PC-9 (cell line): ENCODE measurements at regions of chr9 and their contacts with region 1.

Region 1: GRCh38 chr9:121201738-121202533 is at the start of gene RAB14:
- DNase-seq: peak; percentile 90 to 100
- H3K4me3 ChIP-seq: peak within 1 kb of the TSS; percentile 92
- H3K27ac ChIP-seq: peak within 1 kb of the TSS; percentile 67
- H3K4me1 ChIP-seq: peaks cover 28% of the 10 kb centered on the region
- H3K27me3 ChIP-seq: no peaks in the 10 kb centered on the region
- CTCF ChIP-seq: peak; percentile 59
- total RNA-seq, gene RAB14: 58.1 and 82.6 TPM in 2 replicates

Region 2: GRCh38 chr9:120628207-120628924 is 573.6 kb before region 1 on chr9:
- CTCF ChIA-PET with region 1: no interaction called
- POLR2A ChIA-PET with region 1: no interaction called
- intact Hi-C with region 1: no loop called
- DNase-seq: no peak
- H3K4me3 ChIP-seq: no peak overlapping the region
- H3K27ac ChIP-seq: peak overlapping the region; percentile 32; the same call in 1 of the 2 replicates
- H3K4me1 ChIP-seq: no peaks in the 10 kb centered on the region
- H3K27me3 ChIP-seq: no peaks in the 10 kb centered on the region
- CTCF ChIP-seq: no peak

Region 3: DNA sequence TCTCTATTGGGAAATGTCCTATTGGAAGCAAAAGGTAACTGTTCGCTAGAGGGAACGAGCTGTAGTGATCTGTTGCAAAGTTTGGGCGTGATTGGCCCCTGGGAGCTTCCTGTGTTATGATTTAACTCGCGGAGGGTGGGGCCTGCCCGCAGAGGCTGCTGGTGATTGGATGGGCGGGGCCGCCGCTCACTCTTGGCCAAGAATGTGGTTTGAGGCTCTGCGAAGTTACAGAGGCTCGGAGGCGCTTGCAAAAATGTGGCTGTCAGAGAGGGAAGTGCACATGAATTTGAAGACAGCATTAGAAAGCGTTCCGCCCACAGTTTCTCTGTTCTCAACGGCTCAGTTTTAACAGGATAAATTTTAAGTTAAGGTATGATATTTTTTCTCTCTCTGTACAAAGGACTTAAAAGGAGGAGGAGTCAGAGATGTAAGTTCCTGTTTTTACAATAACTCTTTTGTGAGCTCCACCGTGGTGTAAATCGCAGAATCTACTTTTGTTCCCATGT is 80.3 kb before region 1 on chr9:
- CTCF ChIA-PET with region 1: no interaction called
- POLR2A ChIA-PET with region 1: no interaction called
- intact Hi-C with region 1: loop called (anchors 1 kb)
- DNase-seq: peak; percentile 93 to 96
- H3K4me3 ChIP-seq: peak overlapping the region; percentile 59
- H3K27ac ChIP-seq: peak overlapping the region; percentile 31
- H3K4me1 ChIP-seq: peaks cover 19% of the 10 kb centered on the region; the same call in 1 of the 2 replicates
- H3K27me3 ChIP-seq: no peaks in the 10 kb centered on the region
- CTCF ChIP-seq: no peak; the same call in 1 of the 2 replicates

Region 4: GRCh38 chr9:121169094-121169601 is 32.8 kb before region 1 on chr9:
- CTCF ChIA-PET with region 1: no interaction called
- POLR2A ChIA-PET with region 1: no interaction called
- intact Hi-C with region 1: no loop called
- DNase-seq: no peak
- H3K4me3 ChIP-seq: no peak overlapping the region
- H3K27ac ChIP-seq: no peak overlapping the region
- H3K4me1 ChIP-seq: no peaks in the 10 kb centered on the region
- H3K27me3 ChIP-seq: no peaks in the 10 kb centered on the region
- CTCF ChIP-seq: peak; percentile 57

Region 5: DNA sequence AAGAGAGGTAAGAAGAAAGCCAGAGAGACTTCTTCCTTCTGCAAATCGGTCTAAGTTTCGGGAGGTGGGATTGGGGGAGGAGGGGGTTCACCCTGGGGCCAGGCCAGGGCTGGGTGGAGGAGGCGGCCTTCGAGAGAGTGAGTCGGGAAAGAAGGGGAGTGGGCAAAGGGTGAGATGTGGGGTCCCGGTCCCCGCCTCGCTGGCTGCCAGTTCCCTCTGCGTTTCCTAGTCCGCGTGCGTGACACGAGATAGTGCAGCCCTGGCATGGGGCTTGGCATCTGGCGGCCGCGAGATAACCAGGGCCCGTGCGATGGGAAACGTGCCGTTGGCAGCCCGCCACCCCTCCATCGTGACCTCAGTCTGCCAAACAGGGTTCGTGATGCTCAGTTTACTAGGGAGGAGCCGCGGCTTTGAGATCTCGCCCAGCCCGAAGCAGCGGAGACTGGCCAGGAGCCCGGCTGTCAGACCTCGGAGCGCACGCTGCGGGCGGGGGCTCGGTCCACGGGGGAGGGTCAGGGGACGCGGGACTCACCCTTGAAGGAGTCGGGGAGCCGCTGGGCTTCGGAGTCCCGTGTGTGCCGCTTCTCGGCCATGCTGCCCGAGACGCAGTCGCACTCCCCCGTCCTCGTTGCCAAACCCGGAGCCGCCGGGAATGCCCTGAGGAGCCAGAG is 167.8 kb after region 1 on chr9 and contains the start of gene STOM:
- CTCF ChIA-PET with region 1: no interaction called
- POLR2A ChIA-PET with region 1: interaction called, 11 read pairs
- intact Hi-C with region 1: no loop called
- DNase-seq: no peak
- H3K4me3 ChIP-seq: peak within 1 kb of the TSS; percentile 72
- H3K27ac ChIP-seq: no peak within 1 kb of the TSS
- H3K4me1 ChIP-seq: peaks cover 30% of the 10 kb centered on the region
- H3K27me3 ChIP-seq: no peaks in the 10 kb centered on the region
- CTCF ChIP-seq: no peak
- total RNA-seq, gene STOM: 7.1 and 7.6 TPM in 2 replicates